ENCODE measurements at regions of chr20 and their contacts with region 1.

Region 1: DNA sequence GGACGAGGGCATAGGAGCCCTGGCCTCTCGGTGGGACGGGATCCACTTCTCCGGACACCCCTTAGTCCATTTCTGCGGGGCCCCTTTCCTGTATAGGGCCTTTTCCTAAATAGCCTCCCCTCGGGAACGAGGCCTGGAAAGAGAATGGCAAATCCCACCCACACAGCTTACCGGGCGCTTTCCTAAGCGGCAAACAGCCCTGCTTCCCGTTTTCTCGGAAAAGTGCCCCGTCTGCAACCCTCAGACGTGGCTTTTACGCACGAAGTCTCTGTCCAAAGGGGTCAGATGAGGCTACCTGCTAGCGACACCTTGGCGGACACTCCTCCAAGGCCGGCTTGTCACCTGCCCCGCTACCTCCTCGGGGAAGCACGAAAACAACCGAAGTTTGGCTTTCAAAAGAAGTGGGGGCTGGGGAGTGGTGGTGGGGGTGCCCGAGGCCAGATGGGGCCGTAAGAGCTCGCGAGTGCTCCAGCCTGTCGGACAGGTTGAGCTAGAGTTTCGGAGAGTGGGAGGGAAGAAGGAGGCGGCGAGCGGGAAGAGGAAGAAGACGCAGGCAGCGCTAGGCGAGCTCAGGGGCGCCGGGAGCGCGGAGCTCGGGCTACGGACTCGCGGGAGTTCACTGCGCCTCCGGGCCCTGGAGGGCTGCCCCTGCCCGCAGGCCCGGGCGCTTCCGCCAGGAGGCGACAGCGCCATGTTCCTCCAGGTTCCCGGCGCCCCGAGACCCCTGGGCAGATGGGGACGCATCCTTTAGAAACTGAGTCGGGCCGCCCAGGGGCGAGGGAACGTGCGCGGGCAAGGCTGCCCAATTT is 768 bp downstream of the TFAP2C start:
- DNase-seq: peak; percentile 81
- H3K4me3 ChIP-seq: peak overlapping the region; percentile 59 to 68 (median 64)
- H3K27ac ChIP-seq: peak overlapping the region; percentile 76 to 83 (median 82)
- H3K4me1 ChIP-seq: peaks cover 0 to 67% (median 57%) of the 10 kb centered on the region in 4 donors
- H3K27me3 ChIP-seq: peaks cover 41 to 90% (median 71%) of the 10 kb centered on the region in 3 donors
- CTCF ChIP-seq: peak; percentile 47 to 74 (median 70)
- EP300 ChIP-seq: no peak
- POLR2A ChIP-seq: no peak

Region 2: DNA sequence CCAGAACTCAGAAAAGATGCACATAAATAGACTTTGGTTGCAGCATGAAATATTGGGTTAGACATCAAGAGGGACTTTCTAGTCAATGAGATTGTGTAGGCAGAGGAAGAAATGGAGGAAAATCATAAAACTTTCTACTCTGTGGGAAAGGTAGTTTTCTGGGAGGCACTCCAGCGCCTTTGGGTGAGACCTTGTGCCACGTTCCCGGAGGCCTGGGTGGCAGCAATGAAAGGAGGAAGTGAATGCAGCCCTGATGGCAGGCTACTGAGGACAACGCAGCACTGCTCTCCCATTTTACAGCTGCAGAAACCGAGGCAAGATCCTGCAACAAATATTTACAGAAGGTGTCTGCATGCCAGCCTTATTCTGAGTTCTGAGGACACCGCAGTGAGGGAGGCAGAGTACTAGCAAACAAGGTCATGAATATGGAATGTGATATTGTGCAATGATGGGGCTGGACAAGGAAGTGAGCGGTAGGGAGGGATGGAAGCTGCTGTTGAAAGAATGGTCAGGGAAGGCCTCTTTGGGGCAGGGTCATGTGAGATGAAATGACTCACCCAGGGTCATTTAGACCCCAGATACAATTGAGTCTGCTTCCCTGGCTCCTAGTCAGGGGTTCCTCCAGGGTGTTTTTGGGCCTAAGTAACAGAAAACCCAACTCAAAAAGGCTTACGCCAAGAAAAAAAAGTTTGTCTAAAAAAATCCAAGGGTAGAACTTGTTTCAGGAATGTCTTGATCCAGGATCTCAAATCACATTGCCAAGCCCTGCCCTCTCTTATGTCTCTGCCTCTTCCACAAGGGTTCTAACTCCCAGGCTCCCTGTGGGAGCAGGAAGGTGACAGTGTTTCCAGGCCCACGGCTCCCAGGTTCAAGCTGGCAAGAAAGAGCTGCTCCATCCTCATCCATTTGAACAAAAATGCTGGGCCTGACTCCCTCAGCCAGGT is 158.4 kb after region 1 on chr20:
- intact Hi-C with region 1: loop called (anchors 2 kb)
- DNase-seq: peak; percentile 81
- H3K4me3 ChIP-seq: no peak overlapping the region
- H3K27ac ChIP-seq: peak overlapping the region; percentile 70 to 92 (median 86)
- H3K4me1 ChIP-seq: peaks cover 0 to 39% (median 26%) of the 10 kb centered on the region in 4 donors
- H3K27me3 ChIP-seq: no peaks in the 10 kb centered on the region
- CTCF ChIP-seq: no peak
- EP300 ChIP-seq: peak in 2 of 4 donors; percentile 63 to 83
- POLR2A ChIP-seq: no peak

Region 3: GRCh38 chr20:56865055-56865454 is 235.2 kb after region 1 on chr20:
- intact Hi-C with region 1: loop called (anchors 5 kb)
- DNase-seq: peak; percentile 92
- H3K4me3 ChIP-seq: no peak overlapping the region
- H3K27ac ChIP-seq: peak overlapping the region in 3 of 4 donors; percentile 60 to 69 (median 68)
- H3K4me1 ChIP-seq: peaks cover 0 to 31% (median 20%) of the 10 kb centered on the region in 4 donors
- H3K27me3 ChIP-seq: no peaks in the 10 kb centered on the region
- CTCF ChIP-seq: no peak
- EP300 ChIP-seq: no peak
- POLR2A ChIP-seq: no peak

Region 4: DNA sequence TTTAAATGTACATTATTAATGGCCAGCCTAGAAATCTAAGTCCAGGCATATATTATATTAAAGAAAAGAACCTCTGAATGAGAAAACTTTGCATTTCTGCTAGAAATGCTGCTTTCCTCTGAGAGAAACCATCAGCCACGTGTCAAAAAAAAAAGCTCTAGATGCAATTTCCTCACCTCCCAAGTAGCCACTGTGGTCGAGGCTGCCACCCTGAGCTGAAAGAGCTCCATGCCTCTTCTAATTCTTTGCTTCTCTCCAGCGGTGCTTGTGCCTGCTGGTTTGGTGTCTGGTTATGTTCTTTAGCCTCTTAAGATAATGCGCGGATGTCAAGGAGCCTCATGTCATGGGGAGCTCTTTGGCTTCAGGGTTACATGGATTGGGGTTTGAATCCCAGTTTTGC is 315.2 kb after region 1 on chr20:
- intact Hi-C with region 1: loop called (anchors 2 kb)
- DNase-seq: peak; percentile 69
- H3K4me3 ChIP-seq: no peak overlapping the region
- H3K27ac ChIP-seq: no peak overlapping the region
- H3K4me1 ChIP-seq: no peaks in the 10 kb centered on the region
- H3K27me3 ChIP-seq: no peaks in the 10 kb centered on the region
- CTCF ChIP-seq: peak in 2 of 4 experiments; percentile 5 to 45
- EP300 ChIP-seq: no peak
- POLR2A ChIP-seq: no peak

Region 5: GRCh38 chr20:57048027-57048869 is 418.4 kb after region 1 on chr20:
- intact Hi-C with region 1: loop called (anchors 10 kb)
- DNase-seq: peak; percentile 64
- H3K4me3 ChIP-seq: no peak overlapping the region
- H3K27ac ChIP-seq: no peak overlapping the region
- H3K4me1 ChIP-seq: peaks cover 0 to 10% (median 2%) of the 10 kb centered on the region in 4 donors
- H3K27me3 ChIP-seq: no peaks in the 10 kb centered on the region
- CTCF ChIP-seq: peak in 2 of 4 experiments; percentile 40 to 45
- EP300 ChIP-seq: no peak
- POLR2A ChIP-seq: no peak

Region 6: DNA sequence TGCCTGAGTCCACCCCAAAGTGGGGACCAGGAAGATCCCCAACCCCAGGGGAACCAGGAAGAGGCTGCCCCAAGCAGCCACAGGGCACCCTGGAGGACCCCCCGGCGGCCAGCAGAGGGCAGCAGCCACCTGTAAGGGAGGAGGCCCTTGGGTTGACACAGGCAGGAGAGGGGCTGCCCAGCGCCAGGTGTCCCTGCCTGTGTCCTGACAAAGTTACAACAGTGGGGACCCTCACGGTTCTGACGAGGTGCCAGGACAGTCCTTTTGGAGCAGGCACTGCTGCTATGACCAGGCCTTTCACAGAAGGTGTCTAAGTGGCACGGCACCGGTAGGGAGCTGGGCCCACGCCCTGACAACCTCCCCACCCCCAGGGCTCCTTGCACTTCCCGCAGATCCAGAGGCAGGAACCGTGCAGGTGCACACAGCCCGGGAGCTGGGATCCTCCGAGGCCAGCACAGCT is 459.8 kb after region 1 on chr20:
- intact Hi-C with region 1: no loop called
- DNase-seq: no peak
- H3K4me3 ChIP-seq: no peak overlapping the region
- H3K27ac ChIP-seq: no peak overlapping the region
- H3K4me1 ChIP-seq: peaks cover 0 to 9% (median 2%) of the 10 kb centered on the region in 4 donors
- H3K27me3 ChIP-seq: peaks cover 0 to 15% (median 5%) of the 10 kb centered on the region in 3 donors
- CTCF ChIP-seq: peak; percentile 52 to 90 (median 82)
- EP300 ChIP-seq: no peak
- POLR2A ChIP-seq: no peak